ENCODE measurements at regions of chr22 and their contacts with region 1.

Region 1: GRCh38 chr22:34975721-34976120 is 90.2 kb upstream of the ISX start:
- DNase-seq: peak; percentile 24
- ATAC-seq: peak; percentile 74
- H3K4me3 Mint-ChIP-seq: no peak overlapping the region
- H3K27ac Mint-ChIP-seq: no peak overlapping the region
- H3K4me1 Mint-ChIP-seq: peaks cover 31% of the 10 kb centered on the region
- H3K27me3 Mint-ChIP-seq: peaks cover 3% of the 10 kb centered on the region; the same call in 1 of the 2 replicates
- CTCF ChIP-seq: no peak

Region 2: GRCh38 chr22:34886812-34887211 is 88.9 kb before region 1 on chr22:
- CTCF ChIA-PET with region 1: no interaction called
- POLR2A ChIA-PET with region 1: no interaction called
- DNase-seq: no peak
- ATAC-seq: no peak
- H3K4me3 Mint-ChIP-seq: no peak overlapping the region
- H3K27ac Mint-ChIP-seq: no peak overlapping the region
- H3K4me1 Mint-ChIP-seq: no peaks in the 10 kb centered on the region
- H3K27me3 Mint-ChIP-seq: peaks cover 6% of the 10 kb centered on the region
- CTCF ChIP-seq: no peak

Region 3: DNA sequence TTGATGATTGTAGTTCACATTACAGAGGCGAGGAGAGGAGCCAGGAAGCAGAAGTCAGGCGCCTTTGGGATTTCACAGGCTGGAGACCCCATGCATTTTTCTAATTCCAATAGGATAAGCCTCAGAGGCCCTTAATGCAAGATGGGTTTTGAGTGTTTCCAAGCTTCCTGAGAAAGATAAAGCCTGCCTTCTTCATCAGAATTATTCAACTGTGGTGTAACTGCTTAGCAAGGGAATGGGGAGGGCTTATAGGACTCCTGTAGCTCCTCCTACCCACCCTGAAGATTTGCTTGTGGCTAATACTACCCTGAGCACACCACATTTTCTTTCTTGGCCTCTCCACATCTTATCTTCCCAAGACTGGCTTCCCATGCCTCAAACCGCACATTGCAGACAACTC is 60.9 kb before region 1 on chr22:
- CTCF ChIA-PET with region 1: no interaction called
- POLR2A ChIA-PET with region 1: interaction called, 10 read pairs
- DNase-seq: no peak
- ATAC-seq: peak; percentile 24
- H3K4me3 Mint-ChIP-seq: no peak overlapping the region
- H3K27ac Mint-ChIP-seq: no peak overlapping the region; the same call in 1 of the 2 replicates
- H3K4me1 Mint-ChIP-seq: peaks cover 9% of the 10 kb centered on the region
- H3K27me3 Mint-ChIP-seq: no peaks in the 10 kb centered on the region
- CTCF ChIP-seq: no peak

Region 4: GRCh38 chr22:34943830-34944229 is 31.9 kb before region 1 on chr22:
- CTCF ChIA-PET with region 1: interaction called, 16 read pairs
- POLR2A ChIA-PET with region 1: no interaction called
- DNase-seq: no peak
- ATAC-seq: no peak; the same call in 1 of the 2 replicates
- H3K4me3 Mint-ChIP-seq: no peak overlapping the region
- H3K27ac Mint-ChIP-seq: no peak overlapping the region
- H3K4me1 Mint-ChIP-seq: peaks cover 19% of the 10 kb centered on the region
- H3K27me3 Mint-ChIP-seq: no peaks in the 10 kb centered on the region; the same call in 1 of the 2 replicates
- CTCF ChIP-seq: no peak

Region 5: GRCh38 chr22:34950489-34950888 is 25.2 kb before region 1 on chr22:
- CTCF ChIA-PET with region 1: interaction called, 13 read pairs
- POLR2A ChIA-PET with region 1: no interaction called
- DNase-seq: peak; percentile 16
- ATAC-seq: peak; percentile 95
- H3K4me3 Mint-ChIP-seq: no peak overlapping the region
- H3K27ac Mint-ChIP-seq: peak overlapping the region; percentile 28; the same call in 1 of the 2 replicates
- H3K4me1 Mint-ChIP-seq: peaks cover 21% of the 10 kb centered on the region
- H3K27me3 Mint-ChIP-seq: no peaks in the 10 kb centered on the region; the same call in 1 of the 2 replicates
- CTCF ChIP-seq: no peak

Region 6: DNA sequence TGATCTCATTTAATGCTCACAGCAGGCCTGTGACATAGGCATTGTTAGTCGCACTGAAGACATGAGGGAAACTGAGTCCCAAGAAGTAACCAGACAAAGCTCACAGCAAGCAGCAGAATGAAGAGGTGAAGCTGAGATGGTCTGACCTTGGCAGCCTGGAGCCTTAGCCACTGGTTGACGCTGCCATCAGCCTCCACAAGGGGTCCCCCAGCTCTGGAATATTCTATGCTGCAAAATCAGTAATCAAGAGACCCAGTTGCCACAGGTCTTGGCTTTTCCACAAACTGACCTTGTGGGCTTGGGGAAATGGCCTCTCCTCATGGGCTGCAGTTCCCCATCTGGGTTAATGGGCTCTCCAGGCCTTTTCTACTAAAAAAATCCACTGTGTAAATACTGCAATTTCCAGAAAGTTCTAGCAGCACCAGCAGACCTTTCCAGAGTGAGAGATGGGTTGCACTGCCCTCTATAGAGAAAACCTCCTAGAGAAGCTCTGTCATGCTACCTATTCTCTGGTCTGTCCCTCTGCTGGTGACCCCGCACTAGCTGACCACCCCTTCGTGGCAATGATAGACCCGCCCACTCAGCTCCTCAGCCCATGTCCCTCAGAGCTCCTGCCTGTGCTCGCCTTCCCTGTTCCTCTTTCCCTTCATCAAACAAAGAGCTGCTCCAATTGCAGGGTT is 67.7 kb after region 1 on chr22:
- CTCF ChIA-PET with region 1: no interaction called
- POLR2A ChIA-PET with region 1: no interaction called
- DNase-seq: peak; percentile 44
- ATAC-seq: peak; percentile 79
- H3K4me3 Mint-ChIP-seq: no peak overlapping the region
- H3K27ac Mint-ChIP-seq: no peak overlapping the region
- H3K4me1 Mint-ChIP-seq: peaks cover 14% of the 10 kb centered on the region
- H3K27me3 Mint-ChIP-seq: peaks cover 2% of the 10 kb centered on the region; the same call in 1 of the 2 replicates
- CTCF ChIP-seq: no peak

Region 7: GRCh38 chr22:35116817-35117216 is 141.1 kb after region 1 on chr22:
- CTCF ChIA-PET with region 1: no interaction called
- POLR2A ChIA-PET with region 1: no interaction called
- DNase-seq: no peak
- ATAC-seq: no peak
- H3K4me3 Mint-ChIP-seq: no peak overlapping the region
- H3K27ac Mint-ChIP-seq: no peak overlapping the region
- H3K4me1 Mint-ChIP-seq: peaks cover 4% of the 10 kb centered on the region; the same call in 1 of the 2 replicates
- H3K27me3 Mint-ChIP-seq: no peaks in the 10 kb centered on the region; the same call in 1 of the 2 replicates
- CTCF ChIP-seq: no peak